CD4-positive, alpha-beta T cell (primary cell): ENCODE measurements at regions of chr21 and their contacts with region 1.

Region 1: GRCh38 chr21:46551636-46552241 is 53.1 kb downstream of the S100B start:
- DNase-seq: peak in 11 of 14 experiments; percentile 13 to 76 (median 29)
- ATAC-seq: no peak
- H3K4me3 ChIP-seq: peak overlapping the region; percentile 15
- H3K4me3 Mint-ChIP-seq: peak overlapping the region; percentile 74
- H3K27ac ChIP-seq: peak overlapping the region; percentile 76 to 87
- H3K27ac Mint-ChIP-seq: peak overlapping the region; percentile 98
- H3K4me1 ChIP-seq: peaks cover 64% of the 10 kb centered on the region
- H3K4me1 Mint-ChIP-seq: peaks cover 77% of the 10 kb centered on the region
- H3K27me3 ChIP-seq: no peaks in the 10 kb centered on the region
- H3K27me3 Mint-ChIP-seq: no peaks in the 10 kb centered on the region
- CTCF ChIP-seq: no peak

Region 2: GRCh38 chr21:46458315-46459023 is 93.3 kb before region 1 on chr21 and contains the start of gene DIP2A:
- CTCF ChIA-PET with region 1: no interaction called
- POLR2A ChIA-PET with region 1: interaction called, 11 read pairs
- intact Hi-C with region 1: loop called in 1 of 2 experiments (anchors 5 kb)
- DNase-seq: peak; percentile 85 to 99 (median 93)
- ATAC-seq: peak; percentile 97
- H3K4me3 ChIP-seq: peak within 1 kb of the TSS; percentile 89
- H3K4me3 Mint-ChIP-seq: peak within 1 kb of the TSS; percentile 94
- H3K27ac ChIP-seq: peak within 1 kb of the TSS; percentile 78 to 86
- H3K27ac Mint-ChIP-seq: peak within 1 kb of the TSS; percentile 93
- H3K4me1 ChIP-seq: peaks cover 35% of the 10 kb centered on the region
- H3K4me1 Mint-ChIP-seq: peaks cover 63% of the 10 kb centered on the region
- H3K27me3 ChIP-seq: no peaks in the 10 kb centered on the region
- H3K27me3 Mint-ChIP-seq: no peaks in the 10 kb centered on the region
- CTCF ChIP-seq: no peak
- total RNA-seq, gene DIP2A: 61.2 to 66.1 TPM

Region 3: DNA sequence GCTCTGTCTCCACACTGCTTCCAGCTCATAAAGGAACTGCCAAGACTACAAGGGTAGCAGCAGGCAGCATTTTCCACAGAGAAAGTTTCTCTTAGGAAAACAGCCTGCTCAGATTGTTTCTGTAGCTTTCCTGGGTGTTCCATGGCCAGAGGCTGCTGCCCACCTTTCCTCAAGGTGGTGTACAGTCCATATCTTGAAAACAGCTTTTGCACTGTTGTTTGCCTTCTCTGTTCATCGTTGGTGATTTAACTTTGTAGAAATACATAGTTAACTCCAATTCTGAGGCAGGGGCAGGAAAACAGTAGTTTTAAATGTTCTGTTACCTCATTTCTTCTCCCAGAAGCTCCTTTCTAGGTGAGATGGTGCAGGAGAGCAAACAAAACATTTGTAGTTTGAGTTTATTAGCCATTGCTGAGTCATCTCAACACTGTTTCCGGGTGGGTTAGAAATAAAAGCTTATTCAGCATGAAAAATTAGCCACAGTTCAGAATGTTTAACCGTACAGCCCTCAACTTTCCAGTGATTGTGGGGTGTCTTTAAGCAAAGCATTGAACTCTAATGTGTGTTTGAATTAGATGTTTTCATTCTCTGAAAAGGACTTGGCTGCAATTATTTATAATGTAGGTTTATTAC is 51.4 kb before region 1 on chr21:
- CTCF ChIA-PET with region 1: no interaction called
- POLR2A ChIA-PET with region 1: interaction called, 3 read pairs
- intact Hi-C with region 1: loop called in 1 of 2 experiments (anchors 5 kb)
- DNase-seq: peak in 2 of 14 experiments; percentile 19 to 56
- ATAC-seq: peak; percentile 60
- H3K4me3 ChIP-seq: no peak overlapping the region
- H3K4me3 Mint-ChIP-seq: no peak overlapping the region
- H3K27ac ChIP-seq: peak overlapping the region; percentile 4 to 14
- H3K27ac Mint-ChIP-seq: peak overlapping the region; percentile 57
- H3K4me1 ChIP-seq: peaks cover 17% of the 10 kb centered on the region
- H3K4me1 Mint-ChIP-seq: peaks cover 35% of the 10 kb centered on the region
- H3K27me3 ChIP-seq: no peaks in the 10 kb centered on the region
- H3K27me3 Mint-ChIP-seq: no peaks in the 10 kb centered on the region
- CTCF ChIP-seq: no peak

Region 4: DNA sequence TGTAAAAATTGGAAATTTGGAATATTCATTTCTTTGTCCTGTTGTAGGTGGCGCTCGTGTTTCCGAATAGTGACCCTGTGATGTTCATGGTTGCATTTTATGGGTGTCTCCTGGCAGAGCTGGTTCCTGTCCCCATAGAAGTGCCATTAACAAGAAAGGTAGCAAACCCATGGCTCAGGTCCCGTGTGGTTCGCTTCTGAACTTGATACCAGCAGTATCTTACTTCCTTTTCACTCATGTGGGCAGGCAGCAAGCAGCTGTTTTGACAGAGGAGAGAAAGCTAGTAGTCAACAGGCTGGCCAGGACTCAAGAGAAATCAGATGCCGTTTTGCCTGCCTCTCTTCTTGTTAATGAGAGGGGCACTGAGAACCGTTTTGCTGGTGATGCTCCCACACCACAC is 19.7 kb before region 1 on chr21:
- CTCF ChIA-PET with region 1: no interaction called
- POLR2A ChIA-PET with region 1: interaction called, 30 read pairs
- intact Hi-C with region 1: no loop called
- DNase-seq: peak in 10 of 14 experiments; percentile 9 to 62 (median 34)
- ATAC-seq: peak; percentile 86
- H3K4me3 ChIP-seq: no peak overlapping the region
- H3K4me3 Mint-ChIP-seq: peak overlapping the region; percentile 67
- H3K27ac ChIP-seq: no peak overlapping the region
- H3K27ac Mint-ChIP-seq: peak overlapping the region; percentile 81
- H3K4me1 ChIP-seq: peaks cover 5% of the 10 kb centered on the region
- H3K4me1 Mint-ChIP-seq: peaks cover 54% of the 10 kb centered on the region
- H3K27me3 ChIP-seq: no peaks in the 10 kb centered on the region
- H3K27me3 Mint-ChIP-seq: no peaks in the 10 kb centered on the region
- CTCF ChIP-seq: peak; percentile 29

Region 5: GRCh38 chr21:46540087-46540710 is 11.5 kb before region 1 on chr21:
- CTCF ChIA-PET with region 1: no interaction called
- POLR2A ChIA-PET with region 1: interaction called, 9 read pairs
- intact Hi-C with region 1: loop called in 1 of 2 experiments (anchors 1 kb)
- DNase-seq: peak in 2 of 14 experiments; percentile 48 to 77
- ATAC-seq: peak; percentile 65
- H3K4me3 ChIP-seq: no peak overlapping the region
- H3K4me3 Mint-ChIP-seq: peak overlapping the region; percentile 49
- H3K27ac ChIP-seq: peak overlapping the region in 1 of 2 donors; percentile 37
- H3K27ac Mint-ChIP-seq: peak overlapping the region; percentile 82
- H3K4me1 ChIP-seq: peaks cover 14% of the 10 kb centered on the region
- H3K4me1 Mint-ChIP-seq: peaks cover 54% of the 10 kb centered on the region
- H3K27me3 ChIP-seq: no peaks in the 10 kb centered on the region
- H3K27me3 Mint-ChIP-seq: no peaks in the 10 kb centered on the region
- CTCF ChIP-seq: no peak

Region 6: DNA sequence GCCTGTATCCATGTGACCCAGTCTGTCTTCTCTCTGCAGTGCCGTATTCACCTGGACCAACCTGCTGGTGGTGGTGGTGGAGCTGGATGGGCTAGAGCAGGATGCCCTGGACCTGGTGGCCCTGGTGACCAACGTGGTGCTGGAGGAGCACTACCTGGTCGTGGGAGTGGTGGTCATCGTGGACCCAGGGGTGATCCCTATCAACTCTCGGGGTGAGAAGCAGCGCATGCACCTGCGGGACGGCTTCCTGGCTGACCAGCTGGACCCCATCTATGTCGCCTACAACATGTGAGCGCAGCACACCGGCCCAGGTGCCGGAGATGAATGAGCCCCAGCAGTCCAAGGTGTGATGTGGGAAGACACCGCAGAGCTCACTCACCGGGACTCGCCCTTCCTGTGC is 15.6 kb after region 1 on chr21:
- CTCF ChIA-PET with region 1: interaction called, 4 read pairs
- POLR2A ChIA-PET with region 1: interaction called, 33 read pairs
- intact Hi-C with region 1: no loop called
- DNase-seq: no peak
- ATAC-seq: no peak
- H3K4me3 ChIP-seq: no peak overlapping the region
- H3K4me3 Mint-ChIP-seq: no peak overlapping the region
- H3K27ac ChIP-seq: no peak overlapping the region
- H3K27ac Mint-ChIP-seq: peak overlapping the region; percentile 76
- H3K4me1 ChIP-seq: peaks cover 24% of the 10 kb centered on the region
- H3K4me1 Mint-ChIP-seq: peaks cover 62% of the 10 kb centered on the region
- H3K27me3 ChIP-seq: no peaks in the 10 kb centered on the region
- H3K27me3 Mint-ChIP-seq: no peaks in the 10 kb centered on the region
- CTCF ChIP-seq: no peak

Region 7: GRCh38 chr21:46622226-46622625 is 70.5 kb after region 1 on chr21:
- CTCF ChIA-PET with region 1: no interaction called
- POLR2A ChIA-PET with region 1: interaction called, 7 read pairs
- intact Hi-C with region 1: loop called in 1 of 2 experiments (anchors 2 kb)
- DNase-seq: peak in 9 of 14 experiments; percentile 20 to 90 (median 56)
- ATAC-seq: peak; percentile 70
- H3K4me3 ChIP-seq: no peak overlapping the region
- H3K4me3 Mint-ChIP-seq: peak overlapping the region; percentile 78
- H3K27ac ChIP-seq: peak overlapping the region; percentile 63 to 69
- H3K27ac Mint-ChIP-seq: peak overlapping the region; percentile 94
- H3K4me1 ChIP-seq: peaks cover 69% of the 10 kb centered on the region
- H3K4me1 Mint-ChIP-seq: peaks cover 74% of the 10 kb centered on the region
- H3K27me3 ChIP-seq: no peaks in the 10 kb centered on the region
- H3K27me3 Mint-ChIP-seq: no peaks in the 10 kb centered on the region
- CTCF ChIP-seq: no peak